Activated CD4-positive, alpha-beta T cell treated with anti-CD3 and anti-CD28 coated beads, Interleukin-2, amount 10 ng/mL, durations not matched to agents 7 days and 5 days (primary cell): ENCODE measurements at regions of chr4 and their contacts with region 1.

Region 1: DNA sequence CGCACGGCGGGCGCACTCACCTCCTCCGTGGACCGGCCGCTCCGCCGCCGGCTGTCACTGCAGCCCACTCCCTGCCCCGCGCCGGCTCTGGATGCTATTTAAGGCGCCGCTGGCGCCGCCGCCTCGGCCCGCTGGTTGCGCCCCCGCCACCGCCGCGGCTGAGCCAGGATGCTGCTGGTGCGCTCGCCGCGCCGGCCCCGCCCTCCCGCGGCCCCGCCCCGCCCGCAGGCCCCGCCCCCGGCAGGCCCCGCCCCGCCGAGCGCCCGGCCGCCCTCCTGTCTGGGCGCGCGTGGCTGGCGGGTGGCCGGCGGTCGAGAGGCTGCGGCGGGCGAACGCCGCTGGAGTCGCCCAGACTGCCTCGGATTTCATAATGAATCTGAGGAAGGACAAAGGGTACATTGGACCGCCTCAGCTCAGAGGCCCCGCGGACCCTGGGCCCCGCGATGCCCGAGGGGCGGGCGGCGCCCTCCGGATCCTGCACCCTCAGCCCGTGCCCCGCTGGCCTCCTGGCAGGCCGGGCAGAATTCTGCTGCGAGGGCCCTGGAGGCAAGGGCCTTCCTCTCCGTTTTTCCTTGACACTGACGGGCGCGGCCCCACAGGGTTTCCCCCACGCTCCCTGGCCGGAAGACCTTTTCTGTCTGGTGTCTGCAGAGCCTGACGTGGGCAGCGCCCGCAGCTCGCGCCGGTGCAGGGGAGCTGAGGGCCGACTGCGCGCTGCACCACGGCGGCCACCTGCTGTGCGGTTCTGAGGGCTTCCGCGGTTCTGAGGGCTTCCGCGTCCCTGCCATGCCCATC is at the start of gene ACSL1:
- DNase-seq: peak; percentile 77
- H3K4me3 Mint-ChIP-seq: peak within 1 kb of the TSS; percentile 88
- H3K27ac Mint-ChIP-seq: peak within 1 kb of the TSS; percentile 89
- H3K4me1 Mint-ChIP-seq: peaks cover 40% of the 10 kb centered on the region
- H3K27me3 Mint-ChIP-seq: peaks cover 13% of the 10 kb centered on the region
- total RNA-seq, gene ACSL1: 14.5 to 15.4 TPM

Region 2: DNA sequence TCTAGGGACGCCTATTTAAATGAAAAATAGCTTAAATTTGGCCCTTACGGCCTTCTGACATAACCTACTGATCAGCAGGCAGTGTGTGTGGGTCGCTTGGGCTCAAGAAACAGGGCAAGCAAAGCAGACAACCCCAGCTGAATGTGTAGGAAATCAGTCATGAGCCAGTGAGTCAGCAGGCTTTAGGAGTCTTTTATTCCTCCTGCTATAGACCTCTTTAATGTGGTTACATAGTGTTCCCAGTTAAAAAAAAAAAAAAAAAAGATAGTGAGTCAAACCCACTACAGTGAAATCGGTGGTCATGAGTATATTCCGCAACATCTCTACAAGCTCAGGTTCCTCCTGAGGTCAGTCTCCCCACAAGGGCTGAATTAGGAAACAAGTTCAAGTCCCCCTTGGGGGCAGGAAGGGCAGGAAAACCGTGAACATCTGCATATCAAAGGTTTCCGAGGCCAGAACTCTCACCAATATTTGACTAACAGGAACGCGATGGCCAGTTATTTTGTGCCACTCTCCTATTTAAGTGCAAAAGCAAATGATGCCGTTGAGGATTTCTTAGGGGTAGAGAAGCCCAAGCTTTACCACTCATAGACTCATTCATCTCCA is 33.0 kb before region 1 on chr4:
- CTCF ChIA-PET with region 1: no interaction called
- POLR2A ChIA-PET with region 1: no interaction called
- DNase-seq: no peak
- H3K4me3 Mint-ChIP-seq: no peak overlapping the region
- H3K27ac Mint-ChIP-seq: no peak overlapping the region
- H3K4me1 Mint-ChIP-seq: peaks cover 34% of the 10 kb centered on the region
- H3K27me3 Mint-ChIP-seq: no peaks in the 10 kb centered on the region

Region 3: DNA sequence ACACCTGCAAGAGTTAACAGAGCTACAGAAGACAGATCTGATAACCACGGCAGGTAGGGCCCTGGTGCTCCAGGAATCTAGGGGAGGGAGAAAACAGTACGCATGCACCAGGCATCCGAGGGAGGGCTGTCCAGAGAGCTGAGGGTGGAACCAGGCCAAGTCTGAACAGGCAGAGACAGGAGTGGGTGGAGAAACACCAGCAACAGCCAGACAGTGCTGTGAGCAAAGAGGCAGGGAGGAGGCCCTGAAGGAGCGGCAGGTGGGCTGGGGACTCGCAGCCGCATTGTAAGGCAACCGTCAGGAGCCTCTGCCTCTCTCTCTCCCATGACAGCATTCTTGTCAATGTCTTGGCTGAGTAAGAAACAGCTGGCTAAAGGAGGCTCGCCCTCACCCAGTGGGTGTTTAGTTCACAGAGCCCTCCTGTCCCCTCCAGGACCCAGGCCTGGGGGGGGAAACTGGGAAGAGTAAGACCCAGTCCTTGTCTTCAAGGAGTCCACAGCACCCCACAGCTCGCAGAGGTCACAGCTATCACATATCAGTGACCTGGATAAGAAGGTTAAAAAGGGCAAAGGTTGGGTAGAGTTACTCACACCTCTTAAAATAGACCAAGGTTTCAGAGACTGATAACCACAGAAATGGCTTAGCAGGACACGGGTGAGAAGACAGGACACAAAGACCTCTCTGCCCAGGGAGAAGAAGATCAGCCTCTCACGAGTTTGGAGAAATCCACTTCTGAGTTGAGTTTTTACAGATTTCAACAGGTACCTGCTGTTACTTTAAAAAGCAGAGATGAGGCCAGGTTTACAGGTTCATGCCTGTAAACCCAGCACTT is 10.8 kb before region 1 on chr4:
- CTCF ChIA-PET with region 1: interaction called, 12 read pairs
- POLR2A ChIA-PET with region 1: no interaction called
- DNase-seq: no peak
- H3K4me3 Mint-ChIP-seq: no peak overlapping the region
- H3K27ac Mint-ChIP-seq: no peak overlapping the region
- H3K4me1 Mint-ChIP-seq: peaks cover 37% of the 10 kb centered on the region
- H3K27me3 Mint-ChIP-seq: no peaks in the 10 kb centered on the region

Region 4: GRCh38 chr4:184851200-184851541 is 25.1 kb after region 1 on chr4:
- CTCF ChIA-PET with region 1: no interaction called
- POLR2A ChIA-PET with region 1: no interaction called
- DNase-seq: peak; percentile 19
- H3K4me3 Mint-ChIP-seq: no peak overlapping the region
- H3K27ac Mint-ChIP-seq: no peak overlapping the region
- H3K4me1 Mint-ChIP-seq: peaks cover 23% of the 10 kb centered on the region
- H3K27me3 Mint-ChIP-seq: peaks cover 3% of the 10 kb centered on the region